ENCODE measurements at regions of chr19 and their contacts with region 1.

Region 1: GRCh38 chr19:44093931-44094765 is at the start of gene ZNF224:
- DNase-seq: peak; percentile 73
- H3K4me3 Mint-ChIP-seq: peak within 1 kb of the TSS; percentile 98
- H3K27ac Mint-ChIP-seq: peak within 1 kb of the TSS; percentile 91
- H3K4me1 Mint-ChIP-seq: peaks cover 22% of the 10 kb centered on the region
- H3K27me3 Mint-ChIP-seq: no peaks in the 10 kb centered on the region
- total RNA-seq, gene ZNF224: 18.8 and 20.4 TPM in 2 replicates

Region 2: GRCh38 chr19:43934985-43935708 is 159.0 kb before region 1 on chr19 and contains the start of gene ZNF45:
- intact Hi-C with region 1: loop called (anchors 1 kb)
- DNase-seq: peak; percentile 81
- H3K4me3 Mint-ChIP-seq: peak within 1 kb of the TSS; percentile 95
- H3K27ac Mint-ChIP-seq: peak within 1 kb of the TSS; percentile 83
- H3K4me1 Mint-ChIP-seq: peaks cover 20% of the 10 kb centered on the region
- H3K27me3 Mint-ChIP-seq: no peaks in the 10 kb centered on the region
- total RNA-seq, gene ZNF45: 11.5 and 13.1 TPM in 2 replicates

Region 3: DNA sequence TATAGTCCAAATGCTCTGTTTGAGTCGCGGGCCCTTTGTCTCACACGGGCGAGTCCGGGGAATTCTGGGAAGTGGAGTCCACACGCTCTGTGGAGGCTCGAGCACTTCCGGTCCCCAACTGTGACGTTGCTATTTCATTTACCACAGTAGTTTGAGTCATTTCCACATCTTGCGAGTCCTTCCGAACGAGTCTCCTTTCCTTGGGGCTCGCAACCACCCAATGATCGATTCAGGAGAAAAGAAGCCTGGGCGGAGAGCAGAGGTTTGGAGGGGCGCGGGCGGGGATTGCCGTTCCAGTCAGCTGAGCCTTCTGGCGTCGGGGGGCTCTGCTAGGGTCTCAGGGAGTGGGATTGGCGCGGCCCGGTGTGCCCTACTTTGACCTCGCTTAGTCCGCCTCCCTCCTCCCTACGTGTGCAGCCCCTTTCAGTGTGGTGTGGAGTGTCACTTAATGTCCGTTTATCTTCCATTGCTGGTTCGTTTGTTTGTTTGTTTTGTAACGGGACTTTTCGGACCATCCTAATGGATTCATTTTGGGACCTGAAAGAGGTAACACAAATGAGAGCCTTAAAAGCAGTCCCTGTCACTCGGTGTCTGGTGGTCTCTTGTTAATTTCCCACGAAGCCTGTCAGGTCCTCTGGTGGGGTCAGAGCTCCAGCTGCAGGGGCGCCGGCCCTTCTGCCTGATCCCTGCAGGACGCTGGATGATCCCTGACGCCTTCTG is 68.8 kb before region 1 on chr19 and contains the start of gene ZNF222:
- intact Hi-C with region 1: loop called (anchors 1 kb)
- DNase-seq: peak; percentile 69
- H3K4me3 Mint-ChIP-seq: peak within 1 kb of the TSS; percentile 96
- H3K27ac Mint-ChIP-seq: peak within 1 kb of the TSS; percentile 85
- H3K4me1 Mint-ChIP-seq: peaks cover 18% of the 10 kb centered on the region
- H3K27me3 Mint-ChIP-seq: no peaks in the 10 kb centered on the region
- total RNA-seq, gene ZNF222: 1.2 and 1.5 TPM in 2 replicates

Region 4: DNA sequence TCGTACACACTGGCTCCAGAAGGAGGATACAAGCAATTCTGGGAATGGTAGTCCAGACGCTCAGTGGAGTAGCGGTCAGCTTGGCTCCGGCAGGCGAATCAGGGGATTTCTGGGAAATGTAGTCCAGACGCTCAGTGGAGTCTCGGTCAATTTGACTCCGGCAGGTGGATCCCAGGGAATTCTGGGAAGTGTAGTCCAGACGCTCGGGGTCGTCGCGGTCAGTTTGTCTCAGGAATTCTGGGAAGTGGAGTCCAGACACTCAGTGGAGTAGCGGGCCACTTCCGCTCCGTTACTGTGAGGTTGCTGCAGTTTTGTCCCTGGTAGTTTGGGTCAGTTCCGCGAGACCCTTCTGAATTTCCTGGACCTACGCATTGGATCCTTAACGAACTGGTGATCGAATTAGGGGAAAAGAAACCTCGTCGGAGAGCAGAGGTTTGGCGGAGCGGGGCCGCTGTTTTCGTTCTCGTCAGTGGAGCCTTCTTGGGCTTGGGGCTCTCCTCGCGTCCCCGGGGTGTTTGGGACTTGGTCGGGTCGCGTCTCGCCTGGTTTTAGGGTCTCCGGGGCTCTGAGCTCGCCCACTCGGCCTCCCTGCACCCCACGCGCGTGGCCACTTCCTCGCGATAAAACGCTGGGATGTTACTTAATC is 19.1 kb after region 1 on chr19 and contains the start of gene ZNF225:
- intact Hi-C with region 1: loop called (anchors 1 kb)
- DNase-seq: peak; percentile 81
- H3K4me3 Mint-ChIP-seq: peak within 1 kb of the TSS; percentile 100
- H3K27ac Mint-ChIP-seq: peak within 1 kb of the TSS; percentile 88
- H3K4me1 Mint-ChIP-seq: peaks cover 30% of the 10 kb centered on the region
- H3K27me3 Mint-ChIP-seq: no peaks in the 10 kb centered on the region
- total RNA-seq, gene ZNF225: 3.8 and 5.0 TPM in 2 replicates

Region 5: GRCh38 chr19:44164673-44165512 is 70.7 kb after region 1 on chr19 and contains the start of gene ZNF226:
- intact Hi-C with region 1: loop called (anchors 1 kb)
- DNase-seq: peak; percentile 71
- H3K4me3 Mint-ChIP-seq: peak within 1 kb of the TSS; percentile 90
- H3K27ac Mint-ChIP-seq: peak within 1 kb of the TSS; percentile 84
- H3K4me1 Mint-ChIP-seq: peaks cover 29% of the 10 kb centered on the region
- H3K27me3 Mint-ChIP-seq: no peaks in the 10 kb centered on the region
- total RNA-seq, gene ZNF226: 10.5 and 11.6 TPM in 2 replicates

Region 6: GRCh38 chr19:44304659-44305193 is 210.6 kb after region 1 on chr19 and contains the start of gene ZNF235:
- intact Hi-C with region 1: loop called (anchors 1 kb)
- DNase-seq: peak; percentile 60
- H3K4me3 Mint-ChIP-seq: peak within 1 kb of the TSS; percentile 90
- H3K27ac Mint-ChIP-seq: peak within 1 kb of the TSS; percentile 34
- H3K4me1 Mint-ChIP-seq: peaks cover 20% of the 10 kb centered on the region
- H3K27me3 Mint-ChIP-seq: no peaks in the 10 kb centered on the region
- total RNA-seq, gene ZNF235: 3.8 and 4.7 TPM in 2 replicates